Naive thymus-derived CD4-positive, alpha-beta T cell (primary cell): ENCODE measurements at regions of chr5 and their contacts with region 1.

Region 1: GRCh38 chr5:119340597-119341218 is 15.1 kb upstream of the TNFAIP8 start:
- DNase-seq: peak in 7 of 9 donors; percentile 57 to 72 (median 64)
- ATAC-seq: peak; percentile 71
- H3K4me3 ChIP-seq: peak overlapping the region; percentile 33
- H3K4me3 Mint-ChIP-seq: peak overlapping the region; percentile 64 to 94 (median 86)
- H3K27ac ChIP-seq: peak overlapping the region; percentile 78
- H3K27ac Mint-ChIP-seq: peak overlapping the region; percentile 84 to 99 (median 94)
- H3K4me1 ChIP-seq: peaks cover 91 to 95% of the 10 kb centered on the region in 2 donors
- H3K4me1 Mint-ChIP-seq: peaks cover 78 to 98% (median 97%) of the 10 kb centered on the region in 7 donors
- H3K27me3 ChIP-seq: no peaks in the 10 kb centered on the region
- H3K27me3 Mint-ChIP-seq: no peaks in the 10 kb centered on the region

Region 2: GRCh38 chr5:119070828-119071572 is 269.7 kb before region 1 on chr5 and contains the start of gene DMXL1:
- CTCF ChIA-PET with region 1: no interaction called
- POLR2A ChIA-PET with region 1: interaction called, 9 read pairs
- intact Hi-C with region 1: loop called (anchors 1 to 2 kb)
- DNase-seq: peak; percentile 94 to 99 (median 98)
- ATAC-seq: peak; percentile 92
- H3K4me3 ChIP-seq: peak within 1 kb of the TSS; percentile 63
- H3K4me3 Mint-ChIP-seq: peak within 1 kb of the TSS; percentile 90 to 100 (median 98)
- H3K27ac ChIP-seq: peak within 1 kb of the TSS; percentile 93
- H3K27ac Mint-ChIP-seq: peak within 1 kb of the TSS; percentile 96 to 100 (median 99)
- H3K4me1 ChIP-seq: peaks cover 22 to 25% of the 10 kb centered on the region in 2 donors
- H3K4me1 Mint-ChIP-seq: peaks cover 24 to 44% (median 38%) of the 10 kb centered on the region in 7 donors
- H3K27me3 ChIP-seq: no peaks in the 10 kb centered on the region
- H3K27me3 Mint-ChIP-seq: peaks cover 0 to 2% (median 0%) of the 10 kb centered on the region in 5 donors
- total RNA-seq, gene DMXL1: 30.5 to 40.8 (median 32.4) TPM

Region 3: DNA sequence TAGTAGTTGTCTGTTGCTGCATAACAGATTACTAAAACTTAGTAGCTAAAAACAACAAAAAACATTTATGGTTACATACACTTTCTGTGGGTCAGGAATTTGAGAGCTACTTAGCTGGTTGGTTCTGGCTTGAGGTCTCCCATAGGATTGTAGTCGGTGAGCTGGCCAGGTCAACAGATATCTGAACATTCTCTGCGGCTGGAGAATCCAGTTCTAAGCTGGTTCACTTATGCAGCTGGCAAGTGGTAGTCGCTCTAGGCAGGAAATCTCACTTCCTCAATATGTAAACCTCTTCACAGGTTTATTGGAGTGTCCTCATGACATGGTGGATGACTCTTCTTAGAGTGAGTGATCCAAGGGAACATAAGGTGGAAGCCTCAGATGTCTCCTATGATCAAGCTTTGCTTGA is 50.5 kb before region 1 on chr5:
- CTCF ChIA-PET with region 1: interaction called, 5 read pairs
- POLR2A ChIA-PET with region 1: interaction called, 6 read pairs
- intact Hi-C with region 1: loop called in 1 of 2 experiments (anchors 1 kb)
- DNase-seq: peak in 1 of 9 donors; percentile 39
- ATAC-seq: peak; percentile 62
- H3K4me3 ChIP-seq: peak overlapping the region; percentile 47
- H3K4me3 Mint-ChIP-seq: peak overlapping the region; percentile 63 to 97 (median 82)
- H3K27ac ChIP-seq: peak overlapping the region; percentile 82
- H3K27ac Mint-ChIP-seq: peak overlapping the region; percentile 87 to 100 (median 96)
- H3K4me1 ChIP-seq: peaks cover 65% of the 10 kb centered on the region in 2 donors
- H3K4me1 Mint-ChIP-seq: peaks cover 67 to 95% (median 84%) of the 10 kb centered on the region in 7 donors
- H3K27me3 ChIP-seq: no peaks in the 10 kb centered on the region
- H3K27me3 Mint-ChIP-seq: no peaks in the 10 kb centered on the region

Region 4: GRCh38 chr5:119322948-119323537 is 17.7 kb before region 1 on chr5:
- CTCF ChIA-PET with region 1: interaction called, 4 read pairs
- POLR2A ChIA-PET with region 1: interaction called, 12 read pairs
- intact Hi-C with region 1: loop called in 1 of 2 experiments (anchors 2 kb)
- DNase-seq: no peak
- ATAC-seq: no peak
- H3K4me3 ChIP-seq: no peak overlapping the region
- H3K4me3 Mint-ChIP-seq: peak overlapping the region; percentile 54 to 85 (median 72)
- H3K27ac ChIP-seq: peak overlapping the region; percentile 62
- H3K27ac Mint-ChIP-seq: peak overlapping the region; percentile 90 to 96 (median 94)
- H3K4me1 ChIP-seq: peaks cover 78 to 80% of the 10 kb centered on the region in 2 donors
- H3K4me1 Mint-ChIP-seq: peaks cover 62 to 99% (median 93%) of the 10 kb centered on the region in 7 donors
- H3K27me3 ChIP-seq: no peaks in the 10 kb centered on the region
- H3K27me3 Mint-ChIP-seq: no peaks in the 10 kb centered on the region

Region 5: DNA sequence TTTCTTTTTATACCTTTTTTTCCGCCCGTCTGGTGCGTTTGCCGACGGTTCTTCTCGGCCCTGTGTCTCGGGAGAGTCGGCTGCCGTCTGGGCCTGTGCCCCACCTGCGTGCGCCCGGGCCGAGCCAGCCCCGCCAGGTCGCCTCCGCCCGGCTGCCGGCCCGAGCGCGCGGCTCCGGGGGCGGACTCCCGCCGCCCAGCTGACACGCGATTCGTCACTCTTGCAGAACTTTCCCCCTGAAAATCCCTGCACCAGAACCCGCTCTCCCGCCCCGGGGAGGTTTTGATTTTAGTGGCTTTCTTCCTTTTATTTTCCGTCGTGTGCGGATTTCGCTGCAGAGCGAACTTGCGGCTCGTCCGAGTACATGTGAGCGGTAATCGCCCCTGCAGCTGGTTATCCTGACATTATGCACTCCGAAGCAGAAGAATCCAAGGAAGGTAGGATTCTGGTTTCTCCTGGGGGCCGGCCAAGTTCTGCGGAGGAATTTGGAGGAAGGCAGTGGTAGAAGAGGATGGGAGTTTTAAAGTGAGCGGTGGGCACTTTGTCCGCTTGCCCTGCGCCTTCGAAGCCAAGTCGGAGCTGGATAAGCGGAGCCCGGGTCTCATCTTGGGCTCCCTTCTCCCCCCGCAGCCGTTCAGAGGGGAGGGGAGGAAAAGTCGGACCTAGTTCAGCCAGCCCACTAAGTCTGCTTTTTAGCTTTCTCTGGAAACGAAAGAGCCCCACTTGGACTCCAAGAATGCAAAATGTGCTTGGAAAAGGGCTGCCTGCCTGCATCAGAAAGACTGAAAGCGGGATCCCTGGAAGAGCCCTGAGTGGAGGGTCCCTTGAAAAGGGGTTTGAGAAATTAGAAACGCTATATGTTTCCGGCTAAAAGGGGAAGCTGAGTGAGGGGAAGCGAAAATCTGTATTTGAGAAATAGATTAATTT is 15.2 kb after region 1 on chr5 and contains the start of gene TNFAIP8:
- CTCF ChIA-PET with region 1: interaction called, 5 read pairs
- POLR2A ChIA-PET with region 1: interaction called, 41 read pairs
- intact Hi-C with region 1: loop called (anchors 1 kb)
- DNase-seq: peak in 2 of 9 donors; percentile 69 to 85
- ATAC-seq: peak; percentile 61
- H3K4me3 ChIP-seq: peak within 1 kb of the TSS; percentile 53
- H3K4me3 Mint-ChIP-seq: peak within 1 kb of the TSS; percentile 81 to 98 (median 90)
- H3K27ac ChIP-seq: peak within 1 kb of the TSS; percentile 55
- H3K27ac Mint-ChIP-seq: peak within 1 kb of the TSS; percentile 86 to 97 (median 91)
- H3K4me1 ChIP-seq: peaks cover 78 to 88% of the 10 kb centered on the region in 2 donors
- H3K4me1 Mint-ChIP-seq: peaks cover 66 to 100% (median 97%) of the 10 kb centered on the region in 7 donors
- H3K27me3 ChIP-seq: no peaks in the 10 kb centered on the region
- H3K27me3 Mint-ChIP-seq: no peaks in the 10 kb centered on the region
- total RNA-seq, gene TNFAIP8: 102 to 162 (median 130) TPM

Region 6: DNA sequence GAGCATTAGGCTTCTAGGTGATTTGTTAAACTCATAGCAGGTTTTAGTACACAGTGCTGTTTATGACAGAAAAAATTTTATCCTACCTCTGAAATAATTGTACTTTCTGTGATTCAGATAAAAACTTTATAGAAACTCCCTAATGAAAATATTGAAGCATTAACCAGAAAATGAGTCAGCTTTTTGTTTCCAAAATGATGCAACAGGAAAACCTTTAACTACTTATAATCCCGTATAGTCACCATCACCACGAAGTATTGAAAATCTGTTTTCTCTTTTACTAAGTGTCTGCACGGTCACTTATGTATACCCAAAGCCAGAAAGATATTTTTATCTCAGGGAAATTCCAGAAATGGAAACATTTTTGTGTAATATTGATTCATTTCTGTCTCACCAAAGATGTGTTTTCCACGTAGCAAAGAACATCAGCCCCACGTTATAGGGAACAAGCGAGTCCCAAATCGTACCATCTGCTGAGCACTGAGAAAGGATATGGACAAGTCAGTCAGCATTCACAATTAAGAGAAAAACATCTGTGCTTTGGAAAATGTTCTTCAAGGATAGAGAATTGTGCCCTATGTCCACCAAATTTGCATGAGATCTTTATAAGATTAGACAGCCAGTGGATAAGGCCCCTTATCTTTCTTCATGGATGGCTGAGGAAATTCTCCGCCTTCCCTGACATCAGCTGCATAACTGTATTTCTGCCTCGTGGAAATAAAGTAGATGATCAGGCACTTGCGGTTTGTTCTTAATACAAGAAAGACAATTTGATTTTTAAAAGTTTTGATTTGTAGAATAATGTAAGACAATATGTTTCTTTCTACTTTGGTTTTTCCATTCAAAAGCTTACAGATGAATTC is 57.0 kb after region 1 on chr5:
- CTCF ChIA-PET with region 1: interaction called, 3 read pairs
- POLR2A ChIA-PET with region 1: interaction called, 6 read pairs
- intact Hi-C with region 1: loop called in 1 of 2 experiments (anchors 2 kb)
- DNase-seq: no peak
- ATAC-seq: peak; percentile 62
- H3K4me3 ChIP-seq: no peak overlapping the region
- H3K4me3 Mint-ChIP-seq: peak overlapping the region in 3 of 10 donors; percentile 1 to 37 (median 1)
- H3K27ac ChIP-seq: peak overlapping the region; percentile 25
- H3K27ac Mint-ChIP-seq: peak overlapping the region in 8 of 9 donors; percentile 8 to 82 (median 54)
- H3K4me1 ChIP-seq: no peaks in the 10 kb centered on the region
- H3K4me1 Mint-ChIP-seq: peaks cover 22 to 56% (median 53%) of the 10 kb centered on the region in 7 donors
- H3K27me3 ChIP-seq: no peaks in the 10 kb centered on the region
- H3K27me3 Mint-ChIP-seq: no peaks in the 10 kb centered on the region